ENCODE measurements at regions of chr2 and their contacts with region 1.

Region 1: GRCh38 chr2:161136696-161137324 is 23.4 kb upstream of the TANK start:
- DNase-seq: peak; percentile 64
- H3K4me3 Mint-ChIP-seq: peak overlapping the region; percentile 94
- H3K27ac Mint-ChIP-seq: peak overlapping the region; percentile 98
- H3K4me1 Mint-ChIP-seq: peaks cover 52% of the 10 kb centered on the region
- H3K27me3 Mint-ChIP-seq: no peaks in the 10 kb centered on the region

Region 2: GRCh38 chr2:159904127-159904958 is 1232.5 kb before region 1 on chr2:
- intact Hi-C with region 1: loop called (anchors 10 kb)
- DNase-seq: peak; percentile 69
- H3K4me3 Mint-ChIP-seq: peak within 1 kb of the TSS; percentile 92
- H3K27ac Mint-ChIP-seq: peak within 1 kb of the TSS; percentile 91
- H3K4me1 Mint-ChIP-seq: peaks cover 41% of the 10 kb centered on the region
- H3K27me3 Mint-ChIP-seq: no peaks in the 10 kb centered on the region

Region 3: GRCh38 chr2:161063157-161063954 is 73.5 kb before region 1 on chr2:
- intact Hi-C with region 1: no loop called
- DNase-seq: peak; percentile 59
- H3K4me3 Mint-ChIP-seq: no peak overlapping the region
- H3K27ac Mint-ChIP-seq: no peak overlapping the region
- H3K4me1 Mint-ChIP-seq: peaks cover 30% of the 10 kb centered on the region
- H3K27me3 Mint-ChIP-seq: peaks cover 2% of the 10 kb centered on the region

Region 4: DNA sequence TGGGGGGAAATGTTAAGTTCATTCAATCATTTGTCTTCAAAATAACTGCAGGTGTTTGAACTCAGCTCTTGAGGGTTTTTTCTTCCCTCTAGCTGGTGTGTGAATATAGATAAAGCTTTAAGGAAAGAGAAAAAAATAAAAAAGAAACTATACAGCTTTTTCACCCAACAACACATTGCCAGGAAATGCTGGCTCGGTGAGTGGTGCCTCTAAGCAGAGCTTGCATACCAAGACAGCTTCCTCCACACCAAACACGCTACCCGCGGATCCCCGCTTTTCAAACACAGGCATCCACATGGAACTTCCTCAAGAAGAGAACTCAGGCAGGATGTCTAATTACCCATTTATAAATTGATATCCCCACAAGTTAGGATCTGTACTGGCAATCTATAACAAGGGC is 46.4 kb before region 1 on chr2:
- intact Hi-C with region 1: loop called (anchors 1 kb)
- DNase-seq: peak; percentile 44
- H3K4me3 Mint-ChIP-seq: peak overlapping the region; percentile 64
- H3K27ac Mint-ChIP-seq: peak overlapping the region; percentile 87
- H3K4me1 Mint-ChIP-seq: peaks cover 55% of the 10 kb centered on the region
- H3K27me3 Mint-ChIP-seq: no peaks in the 10 kb centered on the region

Region 5: DNA sequence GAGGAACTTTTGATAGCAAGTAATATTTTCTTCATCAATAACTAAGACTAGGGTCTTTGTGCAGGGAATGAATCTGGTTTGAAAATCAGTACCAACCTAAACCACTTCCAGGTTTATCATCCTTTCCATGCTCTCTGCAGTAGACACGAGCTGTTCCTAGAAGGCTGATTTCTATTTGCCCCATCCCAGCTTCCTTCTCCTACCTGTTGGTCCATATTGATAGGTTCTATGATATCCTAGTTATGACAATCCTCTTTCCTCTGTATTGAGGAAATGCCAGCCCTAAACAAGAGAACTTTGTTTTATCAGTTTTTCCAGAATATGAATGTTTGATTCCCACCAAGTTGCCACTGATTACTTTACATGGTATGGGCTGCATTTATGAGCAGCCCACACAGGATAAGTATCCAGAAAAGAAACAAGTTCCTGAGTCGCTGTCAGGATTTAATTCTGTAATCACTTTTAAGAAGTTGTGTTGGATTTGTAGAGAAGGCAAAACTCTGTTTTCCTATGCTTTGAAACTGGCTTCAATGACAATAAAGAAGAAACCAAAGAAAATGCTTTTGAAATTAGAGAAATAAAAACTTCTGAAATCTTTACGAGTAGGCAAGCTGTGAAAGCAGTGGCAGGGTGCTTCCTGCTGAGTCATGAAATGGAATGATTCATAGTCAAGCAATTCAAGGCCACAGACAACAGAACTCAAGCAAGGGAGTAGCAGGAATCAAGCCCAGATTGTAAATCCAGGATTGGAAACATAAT is 13.9 kb before region 1 on chr2:
- intact Hi-C with region 1: loop called (anchors 1 kb)
- DNase-seq: no peak
- H3K4me3 Mint-ChIP-seq: peak overlapping the region; percentile 15
- H3K27ac Mint-ChIP-seq: peak overlapping the region; percentile 32
- H3K4me1 Mint-ChIP-seq: peaks cover 34% of the 10 kb centered on the region
- H3K27me3 Mint-ChIP-seq: no peaks in the 10 kb centered on the region

Region 6: GRCh38 chr2:161160226-161161069 is 23.6 kb after region 1 on chr2 and contains the start of gene TANK:
- intact Hi-C with region 1: loop called (anchors 1 kb)
- DNase-seq: peak; percentile 88
- H3K4me3 Mint-ChIP-seq: peak within 1 kb of the TSS; percentile 97
- H3K27ac Mint-ChIP-seq: peak within 1 kb of the TSS; percentile 99
- H3K4me1 Mint-ChIP-seq: peaks cover 81% of the 10 kb centered on the region
- H3K27me3 Mint-ChIP-seq: no peaks in the 10 kb centered on the region
- total RNA-seq, gene TANK: 136 and 141 TPM in 2 replicates

Region 7: DNA sequence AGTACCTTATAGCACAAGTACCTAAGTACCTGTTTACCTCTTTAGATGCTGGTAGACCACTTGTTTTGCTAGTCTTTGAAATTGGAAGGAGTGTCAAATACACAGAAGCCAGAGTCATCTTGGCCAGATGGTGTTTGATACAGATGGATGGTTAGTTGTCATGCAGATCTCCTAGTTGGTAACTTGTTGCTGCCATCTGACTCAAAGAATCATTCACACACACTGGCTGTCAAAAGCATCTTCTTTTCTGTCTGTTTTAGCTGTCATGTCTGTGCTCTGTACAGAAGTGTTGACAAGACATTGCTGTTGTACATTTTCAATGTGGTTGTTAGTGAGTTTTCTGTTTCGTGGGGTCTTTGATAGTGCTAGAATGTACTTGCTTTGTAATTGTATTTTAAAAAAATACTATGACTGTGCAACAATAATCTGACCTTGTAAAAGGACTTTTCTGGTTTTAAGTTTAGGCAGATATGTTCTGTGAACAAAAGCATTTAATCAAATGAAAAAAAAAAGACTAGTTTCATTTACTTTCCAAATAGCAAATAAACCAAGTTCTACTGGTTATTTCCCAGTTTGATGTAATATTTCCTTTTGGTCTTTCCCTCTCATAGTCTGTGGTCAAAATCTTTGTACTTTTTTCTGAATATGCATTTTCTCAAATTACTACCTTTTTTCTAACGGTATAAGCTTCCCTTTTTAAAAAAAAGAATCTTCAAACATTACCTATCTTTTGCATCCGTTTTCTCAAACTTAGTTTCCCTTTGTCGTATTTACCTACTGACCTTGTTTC is 63.3 kb after region 1 on chr2:
- intact Hi-C with region 1: loop called (anchors 2 kb)
- DNase-seq: no peak
- H3K4me3 Mint-ChIP-seq: peak overlapping the region; percentile 54
- H3K27ac Mint-ChIP-seq: peak overlapping the region; percentile 90
- H3K4me1 Mint-ChIP-seq: peaks cover 51% of the 10 kb centered on the region
- H3K27me3 Mint-ChIP-seq: no peaks in the 10 kb centered on the region

Region 8: GRCh38 chr2:161273038-161273760 is 136.4 kb after region 1 on chr2:
- intact Hi-C with region 1: no loop called
- DNase-seq: no peak
- H3K4me3 Mint-ChIP-seq: no peak overlapping the region
- H3K27ac Mint-ChIP-seq: no peak overlapping the region
- H3K4me1 Mint-ChIP-seq: peaks cover 5% of the 10 kb centered on the region
- H3K27me3 Mint-ChIP-seq: peaks cover 25% of the 10 kb centered on the region

Region 9: GRCh38 chr2:161919873-161920272 is 783.1 kb after region 1 on chr2:
- intact Hi-C with region 1: no loop called
- DNase-seq: no peak
- H3K4me3 Mint-ChIP-seq: no peak overlapping the region
- H3K27ac Mint-ChIP-seq: no peak overlapping the region
- H3K4me1 Mint-ChIP-seq: no peaks in the 10 kb centered on the region
- H3K27me3 Mint-ChIP-seq: peaks cover 9% of the 10 kb centered on the region